Activated CD4-positive, alpha-beta memory T cell treated with anti-CD3 and anti-CD28 coated beads for 36 hours (primary cell): ENCODE measurements at regions of chr17 and their contacts with region 1.

Region 1: GRCh38 chr17:67376737-67377487 is at the start of gene PITPNC1:
- DNase-seq: peak; percentile 92
- H3K4me3 Mint-ChIP-seq: peak within 1 kb of the TSS; percentile 92
- H3K27ac Mint-ChIP-seq: peak within 1 kb of the TSS; percentile 80
- H3K4me1 Mint-ChIP-seq: peaks cover 40% of the 10 kb centered on the region
- H3K27me3 Mint-ChIP-seq: no peaks in the 10 kb centered on the region
- total RNA-seq, gene PITPNC1: 35.7 to 37.3 TPM

Region 2: DNA sequence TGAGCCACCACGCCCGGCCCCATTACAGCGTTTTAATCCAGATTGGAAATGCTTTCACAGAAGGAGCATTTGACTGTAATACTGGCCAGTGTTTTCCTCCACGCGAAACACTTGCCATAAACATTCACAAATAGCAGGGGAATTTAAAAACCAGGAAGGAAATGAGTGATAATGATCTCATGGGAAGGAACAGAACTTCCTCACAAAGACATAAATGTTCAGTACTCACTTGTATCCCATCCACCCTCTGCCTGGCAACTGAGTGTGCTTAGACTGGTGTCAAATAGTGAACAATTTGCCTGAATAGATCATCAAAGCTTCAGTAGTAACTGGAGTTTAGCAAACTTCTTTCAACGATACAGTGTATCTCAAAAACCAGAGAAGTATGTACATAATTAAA is 64.6 kb before region 1 on chr17:
- CTCF ChIA-PET with region 1: no interaction called
- POLR2A ChIA-PET with region 1: no interaction called
- intact Hi-C with region 1: no loop called
- DNase-seq: no peak
- H3K4me3 Mint-ChIP-seq: no peak overlapping the region
- H3K27ac Mint-ChIP-seq: no peak overlapping the region
- H3K4me1 Mint-ChIP-seq: no peaks in the 10 kb centered on the region
- H3K27me3 Mint-ChIP-seq: no peaks in the 10 kb centered on the region

Region 3: DNA sequence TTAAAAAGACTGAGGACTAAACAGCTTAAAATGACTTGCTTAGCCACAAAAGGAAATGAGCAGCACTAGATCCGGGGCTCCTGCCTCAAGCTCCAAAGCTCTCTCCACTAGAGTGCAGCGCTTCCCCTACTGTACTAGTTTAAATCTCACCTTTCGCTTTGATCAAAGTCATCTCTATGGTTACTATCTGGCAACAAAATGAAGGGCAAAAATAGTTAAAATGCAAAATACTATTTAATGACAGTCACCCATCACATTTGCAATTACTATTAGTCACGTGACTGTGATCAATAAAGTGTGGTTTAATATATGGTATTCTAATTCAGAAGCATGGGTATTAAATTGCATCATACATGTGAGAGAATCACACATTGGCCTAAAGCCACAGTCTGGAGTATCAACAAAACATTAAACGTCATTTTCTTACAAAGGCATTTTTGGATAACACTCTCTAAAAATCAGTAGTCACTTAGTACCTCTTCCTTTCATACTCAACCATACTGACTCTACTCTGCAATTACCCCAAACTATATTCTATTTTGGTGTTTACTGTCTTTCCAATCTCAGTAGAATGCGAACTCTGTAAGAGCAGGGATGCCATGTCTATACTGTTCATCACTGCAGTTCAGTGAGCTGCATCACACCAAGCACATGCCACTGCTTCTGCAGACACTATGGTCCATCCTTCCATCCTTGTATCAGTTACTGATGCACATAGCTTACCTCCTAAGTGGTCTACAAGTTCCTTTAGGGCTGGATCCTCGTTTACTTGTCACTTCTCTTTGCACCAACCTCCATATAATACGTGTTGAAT is 16.7 kb before region 1 on chr17:
- CTCF ChIA-PET with region 1: interaction called, 39 read pairs
- POLR2A ChIA-PET with region 1: interaction called, 37 read pairs
- intact Hi-C with region 1: loop called (anchors 1 kb)
- DNase-seq: peak; percentile 74
- H3K4me3 Mint-ChIP-seq: peak overlapping the region; percentile 65
- H3K27ac Mint-ChIP-seq: peak overlapping the region; percentile 80
- H3K4me1 Mint-ChIP-seq: peaks cover 67% of the 10 kb centered on the region
- H3K27me3 Mint-ChIP-seq: no peaks in the 10 kb centered on the region

Region 4: GRCh38 chr17:67431249-67432048 is 54.5 kb after region 1 on chr17:
- CTCF ChIA-PET with region 1: interaction called, 16 read pairs
- POLR2A ChIA-PET with region 1: interaction called, 4 read pairs
- intact Hi-C with region 1: no loop called
- DNase-seq: peak; percentile 36
- H3K4me3 Mint-ChIP-seq: peak overlapping the region; percentile 58
- H3K27ac Mint-ChIP-seq: peak overlapping the region; percentile 89
- H3K4me1 Mint-ChIP-seq: peaks cover 69% of the 10 kb centered on the region
- H3K27me3 Mint-ChIP-seq: no peaks in the 10 kb centered on the region

Region 5: GRCh38 chr17:67459870-67460455 is 83.1 kb after region 1 on chr17:
- CTCF ChIA-PET with region 1: interaction called, 17 read pairs
- POLR2A ChIA-PET with region 1: no interaction called
- intact Hi-C with region 1: no loop called
- DNase-seq: no peak
- H3K4me3 Mint-ChIP-seq: no peak overlapping the region
- H3K27ac Mint-ChIP-seq: no peak overlapping the region
- H3K4me1 Mint-ChIP-seq: peaks cover 60% of the 10 kb centered on the region
- H3K27me3 Mint-ChIP-seq: no peaks in the 10 kb centered on the region

Region 6: DNA sequence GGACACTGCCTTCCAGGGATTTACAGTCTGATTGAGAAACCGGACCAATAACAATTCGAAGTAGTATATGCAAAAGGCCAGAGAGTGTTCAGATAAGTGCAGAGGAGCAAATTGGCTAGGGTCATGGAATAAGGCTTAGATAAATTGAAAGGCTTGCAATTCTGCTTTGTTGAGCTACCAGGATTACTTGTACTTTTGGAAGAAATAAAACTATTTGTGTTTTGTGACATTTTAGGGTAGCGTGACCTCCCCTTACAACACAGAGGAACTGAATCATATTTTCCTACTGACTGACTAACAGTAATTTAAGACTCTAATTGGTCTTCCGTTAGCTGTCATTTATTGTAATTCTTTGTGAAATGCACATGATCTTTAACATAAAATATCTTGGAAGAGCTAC is 104.9 kb after region 1 on chr17:
- CTCF ChIA-PET with region 1: interaction called, 284 read pairs
- POLR2A ChIA-PET with region 1: interaction called, 3 read pairs
- intact Hi-C with region 1: no loop called
- DNase-seq: no peak
- H3K4me3 Mint-ChIP-seq: no peak overlapping the region
- H3K27ac Mint-ChIP-seq: peak overlapping the region; percentile 34
- H3K4me1 Mint-ChIP-seq: peaks cover 60% of the 10 kb centered on the region
- H3K27me3 Mint-ChIP-seq: no peaks in the 10 kb centered on the region

Region 7: GRCh38 chr17:67689534-67690177 is 312.7 kb after region 1 on chr17:
- CTCF ChIA-PET with region 1: interaction called, 57 read pairs
- POLR2A ChIA-PET with region 1: no interaction called
- intact Hi-C with region 1: loop called (anchors 1 kb)
- DNase-seq: peak; percentile 34
- H3K4me3 Mint-ChIP-seq: no peak overlapping the region
- H3K27ac Mint-ChIP-seq: no peak overlapping the region
- H3K4me1 Mint-ChIP-seq: peaks cover 3% of the 10 kb centered on the region
- H3K27me3 Mint-ChIP-seq: no peaks in the 10 kb centered on the region